Heart left ventricle (tissue), 16 donors: ENCODE measurements at regions of chr4 and their contacts with region 1.

Region 1: DNA sequence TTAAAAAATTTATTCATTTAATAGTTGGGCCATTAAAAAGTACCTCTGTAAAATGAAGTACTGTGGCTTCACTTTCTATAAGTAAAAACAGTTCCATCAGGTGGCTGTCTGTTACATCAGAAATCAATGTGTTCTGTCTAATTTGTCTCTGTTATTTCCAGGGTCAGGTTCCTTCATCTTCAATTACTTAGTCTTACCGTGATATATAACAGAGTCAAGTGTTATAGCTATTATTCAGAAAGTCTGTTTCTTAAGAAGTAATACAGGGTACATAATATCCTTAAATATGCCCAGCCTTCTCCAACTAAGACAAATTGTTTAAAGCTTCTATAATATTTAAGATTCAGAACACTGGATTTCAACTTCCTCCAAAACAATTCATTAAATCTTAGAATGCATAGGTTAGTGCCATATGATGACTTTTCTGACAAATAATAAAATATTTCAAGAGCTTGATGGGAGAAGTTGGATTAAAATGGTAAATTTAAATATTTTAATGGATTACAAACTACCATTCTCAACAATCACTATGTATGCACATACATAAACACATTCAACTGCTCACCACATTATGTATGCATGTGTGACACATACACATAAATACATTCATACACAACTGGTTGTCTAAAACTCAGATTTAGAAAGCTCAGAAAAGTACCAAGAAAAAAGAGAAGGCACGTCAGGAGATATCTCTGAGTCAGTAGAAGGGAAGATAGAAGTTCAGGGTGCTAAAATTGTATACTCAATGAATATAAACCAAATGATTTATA is 268.5 kb downstream of the PRDM5 start:
- DNase-seq: no peak
- ATAC-seq: no peak
- H3K4me3 ChIP-seq: no peak overlapping the region
- H3K27ac ChIP-seq: no peak overlapping the region
- H3K4me1 ChIP-seq: no peaks in the 10 kb centered on the region
- H3K27me3 ChIP-seq: no peaks in the 10 kb centered on the region
- CTCF ChIP-seq: no peak
- POLR2A ChIP-seq: no peak

Region 2: GRCh38 chr4:120406960-120407359 is 247.0 kb before region 1 on chr4:
- intact Hi-C with region 1: no loop called
- DNase-seq: no peak
- ATAC-seq: no peak
- H3K4me3 ChIP-seq: no peak overlapping the region
- H3K27ac ChIP-seq: no peak overlapping the region
- H3K4me1 ChIP-seq: no peaks in the 10 kb centered on the region
- H3K27me3 ChIP-seq: no peaks in the 10 kb centered on the region
- CTCF ChIP-seq: no peak
- POLR2A ChIP-seq: no peak

Region 3: GRCh38 chr4:120557372-120557771 is 96.6 kb before region 1 on chr4:
- intact Hi-C with region 1: no loop called
- DNase-seq: no peak
- ATAC-seq: no peak
- H3K4me3 ChIP-seq: no peak overlapping the region
- H3K27ac ChIP-seq: no peak overlapping the region
- H3K4me1 ChIP-seq: peaks cover 0 to 3% (median 0%) of the 10 kb centered on the region in 12 donors
- H3K27me3 ChIP-seq: no peaks in the 10 kb centered on the region
- CTCF ChIP-seq: no peak
- POLR2A ChIP-seq: no peak

Region 4: GRCh38 chr4:120636120-120636630 is 17.8 kb before region 1 on chr4:
- intact Hi-C with region 1: loop called in 1 of 10 experiments (anchors 2 kb)
- DNase-seq: no peak
- ATAC-seq: no peak
- H3K4me3 ChIP-seq: no peak overlapping the region
- H3K27ac ChIP-seq: no peak overlapping the region
- H3K4me1 ChIP-seq: peaks cover 0 to 5% (median 0%) of the 10 kb centered on the region in 12 donors
- H3K27me3 ChIP-seq: no peaks in the 10 kb centered on the region
- CTCF ChIP-seq: no peak
- POLR2A ChIP-seq: no peak

Region 5: DNA sequence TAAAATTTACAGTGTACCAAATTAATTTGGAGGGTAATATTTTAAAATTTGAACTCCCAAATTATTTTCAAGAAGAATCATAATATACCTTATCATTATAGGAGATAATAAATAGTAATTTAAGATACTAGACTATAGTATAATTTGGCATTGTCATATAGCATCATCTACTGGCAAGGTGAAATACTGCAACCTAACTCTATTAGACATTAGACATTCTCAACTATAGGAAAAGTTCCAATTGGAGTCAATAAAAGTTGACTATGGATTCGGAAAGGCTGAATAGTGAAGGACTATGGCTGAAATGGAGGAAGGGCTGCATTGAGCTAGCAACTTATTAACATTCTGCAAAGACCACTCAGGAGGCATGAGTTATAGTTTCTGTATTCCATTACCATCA is 155.5 kb after region 1 on chr4:
- intact Hi-C with region 1: no loop called
- DNase-seq: no peak
- ATAC-seq: no peak
- H3K4me3 ChIP-seq: no peak overlapping the region
- H3K27ac ChIP-seq: no peak overlapping the region
- H3K4me1 ChIP-seq: no peaks in the 10 kb centered on the region
- H3K27me3 ChIP-seq: no peaks in the 10 kb centered on the region
- CTCF ChIP-seq: peak in 6 of 12 donors; percentile 11 to 27 (median 15)
- POLR2A ChIP-seq: no peak